ENCODE measurements at regions of chr10 and their contacts with region 1.

Region 1: GRCh38 chr10:3791974-3792633 is 7.1 kb upstream of the KLF6 start:
- DNase-seq: no peak

Region 2: GRCh38 chr10:3825244-3825643 is 33.1 kb after region 1 on chr10:
- intact Hi-C with region 1: no loop called
- DNase-seq: no peak

Region 3: DNA sequence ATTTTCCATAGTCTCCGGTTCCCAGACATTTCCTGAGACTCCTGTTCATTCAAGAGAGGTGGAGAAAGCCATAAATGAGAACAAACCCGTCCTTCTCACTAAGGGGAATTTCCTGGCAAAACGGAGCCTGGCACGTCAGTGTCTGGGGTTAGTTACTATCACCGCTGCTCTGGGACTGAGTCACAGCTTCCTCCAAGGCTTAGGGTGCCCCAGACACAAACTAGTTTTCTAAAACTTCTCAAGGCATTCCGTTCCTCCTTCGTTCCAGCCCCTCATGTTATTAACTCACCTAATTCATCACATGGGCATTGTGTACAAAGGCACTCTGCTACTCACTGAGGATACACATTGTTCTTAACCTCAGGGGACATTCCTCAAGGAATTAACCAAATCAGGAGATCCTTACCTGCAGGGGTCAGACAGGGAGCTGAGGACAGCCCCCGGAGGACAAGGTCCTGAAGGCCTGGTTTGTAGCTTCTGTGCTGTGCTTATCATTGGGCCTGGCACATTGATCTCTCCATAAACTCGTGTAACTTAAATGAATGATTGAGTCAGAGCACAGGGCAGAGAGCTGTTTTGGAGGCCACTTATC is 95.9 kb after region 1 on chr10:
- intact Hi-C with region 1: no loop called
- DNase-seq: no peak

Region 4: DNA sequence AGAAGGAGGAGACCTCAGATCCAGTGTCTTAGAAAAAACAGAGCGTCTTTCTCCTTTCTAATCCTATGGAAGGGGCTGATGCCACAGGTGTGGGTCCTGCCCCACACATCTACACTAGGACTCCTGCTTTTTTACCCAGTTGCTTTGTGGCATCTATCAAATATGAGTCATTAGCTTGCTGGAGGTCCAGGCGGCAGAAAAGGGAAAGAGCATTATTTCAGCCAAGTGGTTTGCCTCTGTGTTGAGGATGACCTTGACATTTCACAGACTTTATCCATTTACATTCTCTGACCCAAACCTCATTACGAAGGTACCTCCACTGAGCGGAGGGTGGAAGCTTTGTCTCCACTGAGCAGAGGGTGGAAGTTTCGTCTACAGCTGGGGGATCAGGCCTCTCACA is 301.3 kb after region 1 on chr10:
- intact Hi-C with region 1: no loop called
- DNase-seq: no peak

Region 5: DNA sequence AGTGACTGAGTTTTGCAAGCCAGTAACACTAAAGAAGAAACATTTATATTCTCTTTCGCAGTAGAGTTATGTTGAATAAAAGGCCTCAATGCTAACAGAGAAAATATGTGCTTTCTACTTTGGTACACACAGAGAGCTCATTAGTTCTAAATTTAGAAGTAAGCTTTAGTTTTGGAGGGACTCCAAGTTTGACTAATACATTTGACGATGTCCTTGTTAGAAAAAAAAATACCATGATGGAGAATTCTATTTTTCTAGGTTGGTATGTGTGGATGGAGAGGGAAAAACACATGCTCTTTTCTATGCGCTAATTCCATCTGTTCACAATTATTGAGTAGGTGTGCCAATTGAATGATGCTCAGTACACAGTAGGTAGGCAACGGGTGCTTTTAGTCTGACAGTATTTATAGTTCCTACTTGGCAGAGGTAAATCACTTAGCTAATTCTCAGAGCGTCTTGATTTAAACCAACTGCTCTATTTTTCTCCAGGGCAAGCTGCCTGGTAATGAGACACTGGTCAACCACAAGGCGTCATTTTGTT is 706.7 kb after region 1 on chr10:
- intact Hi-C with region 1: loop called (anchors 5 kb)
- DNase-seq: no peak